ENCODE measurements at regions of chr17 and their contacts with region 1.

Region 1: GRCh38 chr17:16987830-16988601 is 16.1 kb upstream of the TNFRSF13B start:
- DNase-seq: peak; percentile 87
- ATAC-seq: peak; percentile 86
- H3K4me3 Mint-ChIP-seq: peak overlapping the region; percentile 59
- H3K27ac Mint-ChIP-seq: peak overlapping the region; percentile 85
- H3K4me1 Mint-ChIP-seq: peaks cover 37% of the 10 kb centered on the region
- H3K27me3 Mint-ChIP-seq: no peaks in the 10 kb centered on the region

Region 2: DNA sequence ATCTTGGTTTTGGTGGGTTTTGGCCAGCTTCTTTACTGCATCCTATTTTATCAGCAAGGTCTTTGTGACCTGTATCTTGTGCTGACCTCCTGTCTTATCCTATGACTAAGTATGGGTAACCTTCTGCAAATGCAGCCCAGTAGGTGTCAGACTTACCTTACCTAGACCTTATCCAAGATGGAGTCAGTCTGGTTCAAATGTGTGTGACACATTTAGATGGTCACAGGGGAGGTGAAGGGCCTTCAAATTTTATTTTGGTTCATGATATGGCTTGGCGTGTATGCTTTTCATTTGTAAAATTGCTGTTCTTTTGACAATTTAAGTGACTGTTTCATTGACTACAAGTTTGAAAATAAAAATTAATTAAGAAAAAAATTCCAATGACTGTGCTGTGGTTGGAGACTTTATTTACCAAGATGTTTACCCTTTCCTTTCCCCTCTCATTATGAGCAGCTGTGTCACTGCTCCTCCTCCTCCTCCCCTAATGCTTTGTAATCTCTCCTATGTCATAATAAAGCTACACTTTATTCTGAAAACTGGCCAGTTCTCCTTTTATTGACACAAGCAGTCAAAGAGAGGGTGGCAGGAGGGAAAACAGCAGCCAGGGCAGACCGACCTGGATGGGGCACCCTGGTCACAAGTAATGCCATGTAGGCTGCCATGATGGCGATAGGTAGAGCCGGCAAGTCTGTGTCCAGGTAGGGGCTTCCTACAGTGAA is 65.5 kb before region 1 on chr17:
- CTCF ChIA-PET with region 1: interaction called, 9 read pairs
- POLR2A ChIA-PET with region 1: no interaction called
- intact Hi-C with region 1: loop called (anchors 1 kb)
- DNase-seq: no peak
- ATAC-seq: peak; percentile 68
- H3K4me3 Mint-ChIP-seq: no peak overlapping the region
- H3K27ac Mint-ChIP-seq: no peak overlapping the region
- H3K4me1 Mint-ChIP-seq: no peaks in the 10 kb centered on the region
- H3K27me3 Mint-ChIP-seq: no peaks in the 10 kb centered on the region

Region 3: GRCh38 chr17:16938496-16939207 is 49.4 kb before region 1 on chr17:
- CTCF ChIA-PET with region 1: no interaction called
- POLR2A ChIA-PET with region 1: no interaction called
- intact Hi-C with region 1: no loop called
- DNase-seq: no peak
- ATAC-seq: no peak
- H3K4me3 Mint-ChIP-seq: no peak overlapping the region
- H3K27ac Mint-ChIP-seq: no peak overlapping the region
- H3K4me1 Mint-ChIP-seq: no peaks in the 10 kb centered on the region
- H3K27me3 Mint-ChIP-seq: no peaks in the 10 kb centered on the region

Region 4: DNA sequence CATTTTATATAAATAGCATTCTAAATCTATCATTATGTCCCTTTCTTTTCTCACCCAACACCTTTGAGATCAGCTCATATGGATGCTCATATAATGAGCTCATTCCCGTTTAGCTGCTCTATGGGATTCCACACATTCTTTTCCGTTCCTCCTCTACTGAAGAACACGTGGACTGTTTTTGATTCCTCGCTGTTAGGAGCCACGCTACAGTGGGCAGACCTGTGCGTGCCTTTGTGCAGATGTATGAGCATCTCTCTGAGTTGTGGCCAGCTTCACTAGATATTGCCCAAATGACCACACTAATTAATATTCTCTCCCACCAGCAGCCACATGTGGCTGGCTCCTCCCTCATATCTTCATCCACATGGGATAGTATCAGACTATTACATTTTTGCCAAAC is 10.1 kb before region 1 on chr17:
- CTCF ChIA-PET with region 1: interaction called, 11 read pairs
- POLR2A ChIA-PET with region 1: interaction called, 3 read pairs
- intact Hi-C with region 1: no loop called
- DNase-seq: no peak
- ATAC-seq: no peak
- H3K4me3 Mint-ChIP-seq: no peak overlapping the region
- H3K27ac Mint-ChIP-seq: no peak overlapping the region
- H3K4me1 Mint-ChIP-seq: peaks cover 13% of the 10 kb centered on the region
- H3K27me3 Mint-ChIP-seq: no peaks in the 10 kb centered on the region